Activated T-helper 1 cell treated with anti-CD3 and anti-CD28 coated beads, Interleukin-12 subunit alpha, Interleukin-12 subunit beta, Interleukin-2, Interleukin-4 antibody, amounts not matched to agents 30 ng/mL and 10 ng/mL and 1 ng/mL, durations not matched to agents 14 hours and 24 hours and 36 hours (primary cell): ENCODE measurements at regions of chr16 and their contacts with region 1.

Region 1: DNA sequence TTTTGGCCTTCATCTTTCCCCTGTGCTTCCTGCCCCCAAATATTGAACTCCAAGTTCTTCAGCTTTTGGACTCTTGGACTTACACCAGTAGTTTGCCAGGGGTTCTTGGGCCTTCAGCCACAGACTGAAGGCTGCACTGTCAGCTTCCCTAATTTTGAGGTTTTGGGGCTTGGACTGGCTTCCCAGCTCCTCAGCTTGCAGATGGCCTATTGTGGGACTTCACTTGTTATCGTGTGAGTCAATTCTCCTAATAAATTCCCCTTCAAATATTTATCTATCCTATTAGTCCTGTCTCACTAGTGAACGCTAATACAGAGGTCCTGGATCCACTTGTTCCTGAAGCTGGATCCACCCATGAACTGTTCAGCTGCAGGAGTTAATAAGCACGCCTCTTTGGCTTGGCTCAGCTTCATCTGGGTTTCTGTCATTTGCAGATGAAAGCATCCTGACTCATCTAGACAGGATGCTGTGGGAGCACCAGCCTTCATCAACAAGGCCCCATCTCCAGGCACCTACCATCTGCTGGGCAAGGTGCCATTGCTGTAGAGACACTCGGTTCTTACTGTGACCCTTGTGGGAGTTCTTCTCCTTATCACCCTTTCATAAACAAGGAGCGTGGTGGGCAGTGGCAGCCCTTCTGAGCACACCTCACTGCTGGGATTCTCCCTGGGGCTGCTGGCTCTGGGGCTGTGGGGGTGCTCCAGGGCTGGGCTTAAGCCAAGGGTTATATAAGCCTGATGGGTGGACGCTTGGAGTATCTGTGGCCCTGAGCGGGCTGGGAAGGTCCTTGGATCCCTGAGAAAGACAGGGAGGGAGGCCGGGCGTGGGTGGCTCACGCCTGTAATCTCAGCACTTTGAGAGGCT is 23.1 kb downstream of the LAT start:
- DNase-seq: peak; percentile 54
- H3K4me3 Mint-ChIP-seq: peak overlapping the region; percentile 69
- H3K27ac Mint-ChIP-seq: peak overlapping the region; percentile 98
- H3K4me1 Mint-ChIP-seq: peaks cover 50% of the 10 kb centered on the region
- H3K27me3 Mint-ChIP-seq: no peaks in the 10 kb centered on the region

Region 2: DNA sequence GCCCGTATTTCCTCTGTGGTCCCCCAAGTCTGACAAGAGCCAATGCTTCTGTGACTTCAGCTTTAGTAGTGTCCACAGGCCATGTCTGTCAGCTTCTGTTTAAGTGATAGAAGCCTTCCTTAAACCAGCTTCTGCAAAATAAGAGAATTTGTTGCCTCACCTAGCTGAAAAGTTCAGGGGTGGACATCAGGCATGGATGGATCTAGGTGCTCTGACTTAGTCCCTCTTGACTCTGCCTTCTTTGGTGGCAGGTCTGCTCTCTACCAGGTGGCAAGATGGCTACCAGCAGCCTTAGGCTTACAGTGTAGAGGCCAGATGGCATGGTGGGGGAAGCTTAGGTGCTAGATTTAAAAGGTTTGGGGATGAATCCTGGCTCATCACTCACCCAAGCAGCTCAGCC is 1424.3 kb before region 1 on chr16:
- intact Hi-C with region 1: no loop called
- DNase-seq: no peak
- H3K4me3 Mint-ChIP-seq: no peak overlapping the region
- H3K27ac Mint-ChIP-seq: no peak overlapping the region
- H3K4me1 Mint-ChIP-seq: peaks cover 16% of the 10 kb centered on the region
- H3K27me3 Mint-ChIP-seq: no peaks in the 10 kb centered on the region

Region 3: DNA sequence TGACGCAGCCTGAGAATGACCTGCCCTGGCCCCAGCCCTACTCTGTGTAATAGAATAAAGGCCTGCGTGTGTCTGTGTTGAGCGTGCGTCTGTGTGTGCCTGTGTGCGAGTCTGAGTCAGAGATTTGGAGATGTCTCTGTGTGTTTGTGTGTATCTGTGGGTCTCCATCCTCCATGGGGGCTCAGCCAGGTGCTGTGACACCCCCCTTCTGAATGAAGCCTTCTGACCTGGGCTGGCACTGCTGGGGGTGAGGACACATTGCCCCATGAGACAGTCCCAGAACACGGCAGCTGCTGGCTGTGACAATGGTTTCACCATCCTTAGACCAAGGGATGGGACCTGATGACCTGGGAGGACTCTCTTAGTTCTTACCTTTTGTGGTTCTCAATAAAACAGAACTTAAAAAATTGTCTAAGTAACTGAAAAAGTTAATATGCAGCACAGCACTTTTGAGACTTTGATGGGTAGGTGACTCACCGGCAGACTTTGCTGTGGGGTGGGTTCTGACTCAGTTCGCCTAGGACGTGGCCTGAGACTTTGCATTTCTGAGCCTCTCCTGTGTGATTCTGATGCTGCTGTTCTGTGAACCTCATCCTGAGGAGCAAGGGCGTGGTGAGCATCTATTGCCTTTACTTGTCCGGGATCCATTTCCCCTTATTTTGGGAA is 17.5 kb before region 1 on chr16:
- intact Hi-C with region 1: loop called (anchors 1 kb)
- DNase-seq: peak; percentile 29
- H3K4me3 Mint-ChIP-seq: peak overlapping the region; percentile 90
- H3K27ac Mint-ChIP-seq: peak overlapping the region; percentile 82
- H3K4me1 Mint-ChIP-seq: peaks cover 42% of the 10 kb centered on the region
- H3K27me3 Mint-ChIP-seq: no peaks in the 10 kb centered on the region

Region 4: GRCh38 chr16:29023279-29024277 is 15.6 kb after region 1 on chr16:
- intact Hi-C with region 1: loop called (anchors 1 kb)
- DNase-seq: no peak
- H3K4me3 Mint-ChIP-seq: no peak overlapping the region
- H3K27ac Mint-ChIP-seq: no peak overlapping the region
- H3K4me1 Mint-ChIP-seq: peaks cover 55% of the 10 kb centered on the region
- H3K27me3 Mint-ChIP-seq: no peaks in the 10 kb centered on the region